ENCODE measurements at regions of chr6 and their contacts with region 1.

Region 1: DNA sequence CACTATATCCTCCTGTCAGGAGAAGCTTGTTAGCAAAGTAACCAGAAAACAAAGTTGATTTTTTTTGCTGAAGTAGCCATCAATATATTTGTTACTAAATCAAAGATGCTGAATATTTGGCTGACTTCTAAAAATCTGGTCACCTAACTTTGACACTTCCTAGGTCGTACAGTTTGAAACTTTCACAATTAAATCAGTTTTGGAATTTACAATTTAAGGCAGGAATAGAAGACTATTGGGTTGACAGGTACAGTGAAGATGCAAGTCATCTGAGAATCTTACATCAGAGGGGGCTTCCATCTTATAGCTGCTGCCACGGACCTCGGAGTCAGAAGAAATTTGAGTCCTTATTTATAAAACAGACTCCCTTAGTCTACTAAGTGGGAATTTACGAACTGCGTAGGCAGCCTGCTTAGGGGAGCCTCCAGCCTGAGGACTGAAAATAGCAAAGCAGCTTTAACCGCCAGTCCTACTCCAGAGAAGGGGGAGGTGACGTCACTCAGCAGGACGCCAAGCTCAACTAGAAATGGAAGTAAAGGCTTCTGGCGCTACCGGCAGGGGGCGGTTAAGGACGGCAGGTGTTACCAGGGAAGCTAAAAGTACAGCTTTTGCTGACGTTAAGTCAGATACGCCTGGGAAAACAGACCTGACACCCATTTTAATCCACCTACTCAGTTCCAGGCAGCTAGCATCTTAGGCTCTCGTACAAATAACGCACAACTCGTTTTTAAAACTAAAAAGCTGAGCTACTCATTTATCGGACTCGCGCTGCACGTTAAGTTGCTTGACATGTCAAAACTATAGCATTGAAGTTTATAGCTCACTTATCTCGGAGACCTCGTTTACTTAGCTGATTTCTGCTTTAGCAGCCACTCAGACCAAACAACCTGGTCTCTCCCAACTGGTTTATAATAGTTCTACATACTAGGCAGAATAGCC is 61.1 kb upstream of the HFE start:
- DNase-seq: peak; percentile 89
- H3K4me3 Mint-ChIP-seq: peak overlapping the region; percentile 75
- H3K27ac Mint-ChIP-seq: peak overlapping the region; percentile 90
- H3K4me1 Mint-ChIP-seq: peaks cover 77% of the 10 kb centered on the region
- H3K27me3 Mint-ChIP-seq: no peaks in the 10 kb centered on the region

Region 2: DNA sequence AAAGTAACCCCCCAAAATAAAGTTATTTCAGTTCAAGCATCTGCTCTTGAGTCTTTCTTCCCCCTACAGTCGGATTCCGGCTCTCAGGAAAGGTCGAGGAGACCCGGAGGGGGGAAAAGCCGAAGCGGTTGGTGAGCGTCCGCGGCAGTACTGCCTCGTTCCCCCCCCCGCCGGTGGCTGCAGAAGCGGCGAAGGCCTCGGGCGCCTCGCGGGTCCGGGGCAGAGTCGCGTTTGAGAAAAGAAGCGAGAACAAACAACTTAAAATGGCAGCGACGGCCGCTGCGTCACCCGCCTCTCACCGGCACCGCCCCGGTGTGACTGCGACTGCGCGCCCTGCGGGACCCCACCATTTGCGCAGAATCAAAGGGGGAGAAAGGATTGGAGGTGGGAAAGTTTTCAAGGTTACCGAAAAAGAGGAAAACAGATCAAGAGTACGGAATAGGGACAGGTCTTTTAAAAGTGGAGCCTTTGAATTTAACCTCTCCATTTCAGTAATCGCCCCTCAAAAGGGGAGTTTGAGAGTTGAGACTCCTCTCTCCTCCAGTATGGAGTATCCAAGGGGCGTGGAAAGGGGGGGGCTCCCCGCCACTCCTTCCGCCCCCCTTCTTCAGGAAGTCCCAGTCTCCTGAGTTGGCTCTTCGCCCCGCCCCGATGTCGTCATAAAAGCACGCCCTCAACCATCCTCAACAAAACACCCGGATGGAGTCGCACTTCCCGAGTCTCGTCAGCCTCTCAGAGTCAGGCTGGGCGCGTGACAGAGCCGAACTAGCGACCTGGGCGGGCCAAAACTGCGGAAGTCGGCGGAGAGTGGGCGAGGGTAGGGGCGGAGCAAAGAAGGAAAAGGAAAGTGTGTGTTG is 1305.3 kb before region 1 on chr6:
- intact Hi-C with region 1: loop called (anchors 2 kb)
- DNase-seq: peak; percentile 100
- H3K4me3 Mint-ChIP-seq: peak overlapping the region; percentile 99
- H3K27ac Mint-ChIP-seq: peak overlapping the region; percentile 100
- H3K4me1 Mint-ChIP-seq: peaks cover 33% of the 10 kb centered on the region
- H3K27me3 Mint-ChIP-seq: no peaks in the 10 kb centered on the region

Region 3: GRCh38 chr6:26045065-26045927 is 19.1 kb after region 1 on chr6:
- intact Hi-C with region 1: loop called (anchors 1 kb)
- DNase-seq: peak; percentile 81
- H3K4me3 Mint-ChIP-seq: peak overlapping the region; percentile 81
- H3K27ac Mint-ChIP-seq: peak overlapping the region; percentile 99
- H3K4me1 Mint-ChIP-seq: peaks cover 39% of the 10 kb centered on the region
- H3K27me3 Mint-ChIP-seq: no peaks in the 10 kb centered on the region

Region 4: DNA sequence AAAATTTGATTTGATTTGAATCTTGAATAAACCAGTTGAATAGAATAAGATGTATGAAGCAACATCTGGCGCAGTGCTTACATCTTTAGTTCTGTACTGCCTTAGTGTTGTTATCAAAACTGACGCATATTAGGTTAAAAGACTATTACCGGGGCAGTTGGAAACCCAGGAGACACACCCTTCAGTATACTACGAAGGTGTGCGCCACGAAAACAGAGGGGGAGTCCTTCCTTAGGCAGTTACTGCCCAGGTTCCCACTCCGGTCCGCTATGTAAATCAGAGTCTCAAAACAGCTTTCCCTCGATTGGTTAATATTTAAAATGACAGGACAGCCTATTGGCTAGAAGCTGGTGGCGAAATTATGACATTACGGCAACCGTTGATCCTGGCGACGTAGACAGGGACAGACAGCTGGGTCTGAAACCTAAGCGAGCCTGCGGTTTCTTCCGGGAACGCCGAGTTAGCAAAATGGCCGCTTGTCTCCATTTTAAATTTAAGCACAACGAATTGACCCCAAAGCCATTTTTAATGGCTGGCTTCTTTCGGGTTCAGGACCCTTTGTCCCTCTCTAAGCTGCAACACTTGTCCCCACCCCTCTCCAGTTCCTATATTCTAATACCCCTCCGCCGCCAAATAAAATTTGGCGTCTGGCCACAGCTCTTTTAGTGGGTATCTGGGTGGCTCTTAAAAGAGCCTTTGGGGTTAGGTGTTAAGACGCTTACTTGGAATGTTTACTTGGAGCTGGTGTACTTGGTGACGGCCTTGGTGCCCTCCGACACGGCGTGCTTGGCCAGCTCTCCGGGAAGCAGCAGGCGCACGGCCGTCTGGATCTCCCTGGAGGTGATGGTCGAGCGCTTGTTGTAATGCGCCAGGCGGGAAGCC is 96.9 kb after region 1 on chr6:
- intact Hi-C with region 1: loop called (anchors 1 kb)
- DNase-seq: peak; percentile 91
- H3K4me3 Mint-ChIP-seq: peak overlapping the region; percentile 100
- H3K27ac Mint-ChIP-seq: peak overlapping the region; percentile 99
- H3K4me1 Mint-ChIP-seq: peaks cover 42% of the 10 kb centered on the region
- H3K27me3 Mint-ChIP-seq: no peaks in the 10 kb centered on the region

Region 5: DNA sequence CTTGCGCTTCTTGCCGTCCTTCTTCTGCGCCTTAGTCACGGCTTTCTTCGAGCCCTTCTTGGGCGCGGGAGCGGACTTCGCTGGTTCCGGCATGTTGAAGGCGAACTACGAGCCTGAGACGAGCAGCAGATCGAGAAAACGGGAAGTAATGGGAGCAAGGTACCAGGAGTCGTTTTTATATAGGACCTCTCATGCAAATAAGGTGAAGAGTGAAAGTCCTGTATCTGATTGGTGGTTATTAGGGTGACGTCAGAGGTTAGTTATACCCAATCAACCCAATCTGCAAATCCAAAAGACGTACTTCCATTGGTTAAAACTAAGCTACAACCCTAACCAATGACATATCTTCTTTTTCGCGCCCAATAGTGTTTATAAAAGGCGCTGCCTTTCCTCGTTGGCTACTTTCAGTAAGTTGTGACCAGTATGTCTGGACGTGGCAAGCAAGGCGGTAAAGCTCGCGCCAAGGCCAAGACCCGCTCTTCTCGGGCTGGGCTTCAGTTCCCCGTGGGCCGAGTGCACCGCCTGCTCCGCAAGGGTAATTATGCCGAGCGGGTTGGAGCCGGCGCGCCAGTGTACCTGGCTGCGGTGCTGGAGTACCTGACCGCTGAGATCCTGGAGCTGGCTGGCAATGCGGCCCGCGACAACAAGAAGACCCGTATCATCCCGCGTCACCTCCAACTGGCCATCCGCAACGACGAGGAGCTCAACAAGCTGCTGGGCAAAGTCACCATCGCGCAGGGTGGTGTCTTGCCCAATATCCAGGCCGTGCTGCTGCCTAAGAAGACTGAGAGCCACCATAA is 1120.7 kb after region 1 on chr6:
- intact Hi-C with region 1: loop called (anchors 2 kb)
- DNase-seq: peak; percentile 84
- H3K4me3 Mint-ChIP-seq: no peak overlapping the region
- H3K27ac Mint-ChIP-seq: no peak overlapping the region
- H3K4me1 Mint-ChIP-seq: peaks cover 12% of the 10 kb centered on the region
- H3K27me3 Mint-ChIP-seq: no peaks in the 10 kb centered on the region